ENCODE measurements at regions of chr14 and their contacts with region 1.

Region 1: DNA sequence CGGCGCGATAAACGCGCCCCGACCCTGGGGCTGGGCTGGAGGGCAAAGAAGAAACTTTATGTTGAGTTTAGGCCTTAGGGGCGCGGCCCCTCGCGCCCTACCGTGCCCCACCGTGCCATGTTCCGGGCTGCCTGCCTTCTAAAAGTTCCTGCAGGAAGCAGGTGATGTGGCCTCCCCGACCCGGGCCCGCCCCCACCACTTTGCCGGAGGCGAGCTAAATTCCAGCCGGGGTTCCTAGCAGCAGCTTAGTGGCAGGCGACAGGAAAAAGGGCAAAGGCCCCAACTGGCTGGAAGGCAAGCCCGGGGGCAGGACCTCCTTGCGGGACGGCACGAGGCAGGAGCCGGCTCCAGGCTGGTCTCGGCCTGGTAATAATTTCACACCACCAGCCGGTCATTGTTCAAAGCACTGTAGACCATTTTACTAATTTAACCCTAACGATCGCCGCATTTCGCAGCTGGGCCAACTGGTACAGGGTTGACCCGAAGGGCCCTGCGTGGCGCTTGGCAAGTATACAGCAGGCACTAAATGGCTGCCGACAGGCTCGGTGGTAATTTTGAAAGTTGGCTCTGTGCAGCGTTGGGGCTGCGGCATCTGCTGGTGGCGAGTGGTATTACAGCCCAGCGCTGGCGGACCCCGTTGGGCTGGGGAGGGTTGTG is 895 bp upstream of the CCDC88C start:
- DNase-seq: peak; percentile 88
- ATAC-seq: peak; percentile 20
- H3K4me3 Mint-ChIP-seq: peak overlapping the region; percentile 65
- H3K27ac Mint-ChIP-seq: peak overlapping the region; percentile 82
- H3K4me1 Mint-ChIP-seq: peaks cover 32% of the 10 kb centered on the region
- H3K27me3 Mint-ChIP-seq: no peaks in the 10 kb centered on the region

Region 2: GRCh38 chr14:90383075-90383730 is 1035.3 kb before region 1 on chr14:
- CTCF ChIA-PET with region 1: interaction called, 4 read pairs
- POLR2A ChIA-PET with region 1: no interaction called
- intact Hi-C with region 1: loop called in 1 of 2 experiments (anchors 5 kb)
- DNase-seq: peak; percentile 99
- ATAC-seq: peak; percentile 89
- H3K4me3 Mint-ChIP-seq: no peak overlapping the region
- H3K27ac Mint-ChIP-seq: no peak overlapping the region
- H3K4me1 Mint-ChIP-seq: peaks cover 27% of the 10 kb centered on the region
- H3K27me3 Mint-ChIP-seq: no peaks in the 10 kb centered on the region

Region 3: DNA sequence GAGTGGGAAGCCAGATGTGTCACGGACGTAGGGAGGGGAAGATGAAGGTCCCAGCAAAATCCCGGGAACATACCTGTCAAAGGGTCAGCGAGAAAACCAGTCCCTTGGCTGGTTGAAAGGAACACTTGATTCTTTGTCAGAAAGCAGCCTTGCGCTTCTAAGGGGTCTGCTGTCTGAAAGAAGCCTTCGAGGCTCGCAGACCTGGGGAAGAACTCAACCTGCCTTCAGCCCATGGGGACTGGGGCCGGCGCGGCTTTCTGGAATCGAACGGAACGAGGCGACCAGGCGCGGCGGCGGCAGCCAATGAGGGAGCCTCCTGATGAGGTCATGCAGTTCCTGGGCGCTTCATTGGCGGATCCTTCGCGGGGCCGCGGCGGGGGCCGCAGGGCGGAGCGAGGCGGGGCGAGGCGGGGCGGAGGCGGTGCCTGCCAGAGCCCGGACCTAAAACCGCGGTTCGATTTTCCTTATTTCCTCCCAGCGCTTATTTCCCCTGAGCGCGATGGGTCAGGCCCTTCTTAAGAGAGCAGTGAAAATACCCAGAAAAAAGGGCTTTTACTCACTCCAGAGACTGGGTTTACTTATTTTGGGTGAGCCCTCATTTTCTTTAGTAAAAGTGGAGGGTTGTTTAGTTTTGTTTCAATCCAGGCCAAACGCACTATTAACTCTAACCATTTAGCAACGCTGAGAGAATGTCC is 590.5 kb before region 1 on chr14:
- CTCF ChIA-PET with region 1: no interaction called
- POLR2A ChIA-PET with region 1: no interaction called
- intact Hi-C with region 1: loop called in 1 of 2 experiments (anchors 5 kb)
- DNase-seq: peak; percentile 95
- ATAC-seq: peak; percentile 99
- H3K4me3 Mint-ChIP-seq: peak overlapping the region; percentile 68
- H3K27ac Mint-ChIP-seq: peak overlapping the region; percentile 88
- H3K4me1 Mint-ChIP-seq: peaks cover 20% of the 10 kb centered on the region
- H3K27me3 Mint-ChIP-seq: no peaks in the 10 kb centered on the region

Region 4: DNA sequence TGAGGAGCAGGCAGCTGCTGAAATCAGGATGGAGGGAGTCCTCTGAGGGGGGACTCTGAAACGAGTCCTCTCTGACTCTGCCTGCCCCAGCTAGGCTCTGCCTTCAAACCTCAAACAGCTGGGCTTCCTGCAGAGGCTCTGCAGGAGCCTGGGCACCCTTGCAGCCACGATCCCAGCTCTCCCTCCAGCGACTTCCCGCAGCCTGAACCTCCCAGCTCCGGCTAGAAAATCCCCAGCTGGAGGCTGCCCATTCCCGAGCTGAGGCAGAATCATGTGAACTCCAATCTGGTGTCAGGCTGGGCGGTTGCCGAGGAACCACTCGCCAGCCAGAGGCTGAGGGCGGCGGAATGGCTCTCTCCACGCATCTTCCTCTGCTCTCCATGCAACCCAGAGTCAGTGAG is 174.0 kb before region 1 on chr14 and contains the start of gene GPR68:
- CTCF ChIA-PET with region 1: interaction called, 4 read pairs
- POLR2A ChIA-PET with region 1: interaction called, 5 read pairs
- intact Hi-C with region 1: loop called (anchors 1 to 5 kb)
- DNase-seq: no peak
- ATAC-seq: no peak
- H3K4me3 Mint-ChIP-seq: peak within 1 kb of the TSS; percentile 74
- H3K27ac Mint-ChIP-seq: peak within 1 kb of the TSS; percentile 89
- H3K4me1 Mint-ChIP-seq: peaks cover 95% of the 10 kb centered on the region
- H3K27me3 Mint-ChIP-seq: no peaks in the 10 kb centered on the region
- total RNA-seq, gene GPR68: 9.4 to 11.2 TPM

Region 5: GRCh38 chr14:91317381-91318308 is 100.9 kb before region 1 on chr14:
- CTCF ChIA-PET with region 1: interaction called, 177 read pairs
- POLR2A ChIA-PET with region 1: interaction called, 6 read pairs
- intact Hi-C with region 1: loop called in 1 of 2 experiments (anchors 1 kb)
- DNase-seq: peak; percentile 93
- ATAC-seq: peak; percentile 60
- H3K4me3 Mint-ChIP-seq: peak overlapping the region; percentile 56
- H3K27ac Mint-ChIP-seq: peak overlapping the region; percentile 96
- H3K4me1 Mint-ChIP-seq: peaks cover 83% of the 10 kb centered on the region
- H3K27me3 Mint-ChIP-seq: no peaks in the 10 kb centered on the region

Region 6: DNA sequence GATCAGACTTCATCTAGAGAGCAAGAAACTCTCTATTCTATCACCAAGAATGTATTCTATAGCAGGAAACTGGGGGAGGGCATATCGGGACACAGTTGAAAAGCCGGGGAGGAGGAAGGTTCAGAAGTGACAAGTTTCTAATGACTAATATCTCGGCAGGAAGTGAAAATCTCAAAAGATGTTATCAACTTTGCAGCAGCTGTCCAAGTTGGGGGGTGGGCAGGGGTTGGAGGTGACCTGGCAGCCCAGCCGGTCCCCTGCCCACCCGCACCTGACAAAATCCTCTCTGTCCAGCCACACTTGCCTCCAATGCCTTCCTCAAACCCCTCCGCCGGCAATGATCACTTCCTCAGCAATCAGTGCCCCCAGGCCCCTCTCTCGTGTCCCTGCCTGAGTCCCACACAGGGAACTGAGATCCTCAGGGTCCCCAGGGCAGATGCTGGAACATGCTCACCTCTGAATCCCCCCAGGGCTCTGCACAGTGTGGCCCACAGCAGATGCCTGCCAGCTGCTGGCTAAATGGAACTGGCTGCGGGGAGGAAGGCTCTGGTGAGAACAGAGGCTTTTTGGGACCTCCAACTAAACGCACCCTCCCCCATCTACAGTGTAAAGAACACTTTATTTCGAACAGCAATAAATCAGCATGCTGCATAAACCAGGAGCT is 44.8 kb before region 1 on chr14:
- CTCF ChIA-PET with region 1: interaction called, 5 read pairs
- POLR2A ChIA-PET with region 1: no interaction called
- intact Hi-C with region 1: loop called (anchors 1 kb)
- DNase-seq: peak; percentile 81
- ATAC-seq: peak; percentile 71
- H3K4me3 Mint-ChIP-seq: peak overlapping the region; percentile 50
- H3K27ac Mint-ChIP-seq: peak overlapping the region; percentile 86
- H3K4me1 Mint-ChIP-seq: peaks cover 99% of the 10 kb centered on the region
- H3K27me3 Mint-ChIP-seq: no peaks in the 10 kb centered on the region

Region 7: GRCh38 chr14:91439345-91439744 is 20.8 kb after region 1 on chr14:
- CTCF ChIA-PET with region 1: no interaction called
- POLR2A ChIA-PET with region 1: no interaction called
- intact Hi-C with region 1: no loop called
- DNase-seq: no peak
- ATAC-seq: no peak
- H3K4me3 Mint-ChIP-seq: no peak overlapping the region
- H3K27ac Mint-ChIP-seq: no peak overlapping the region
- H3K4me1 Mint-ChIP-seq: no peaks in the 10 kb centered on the region
- H3K27me3 Mint-ChIP-seq: no peaks in the 10 kb centered on the region

Region 8: GRCh38 chr14:91872517-91873470 is 454.3 kb after region 1 on chr14:
- CTCF ChIA-PET with region 1: no interaction called
- POLR2A ChIA-PET with region 1: no interaction called
- intact Hi-C with region 1: loop called in 1 of 2 experiments (anchors 5 kb)
- DNase-seq: peak; percentile 51
- ATAC-seq: no peak
- H3K4me3 Mint-ChIP-seq: peak overlapping the region; percentile 67
- H3K27ac Mint-ChIP-seq: peak overlapping the region; percentile 94
- H3K4me1 Mint-ChIP-seq: peaks cover 93% of the 10 kb centered on the region
- H3K27me3 Mint-ChIP-seq: no peaks in the 10 kb centered on the region